ENCODE measurements at regions of chr2 and their contacts with region 1.

Region 1: DNA sequence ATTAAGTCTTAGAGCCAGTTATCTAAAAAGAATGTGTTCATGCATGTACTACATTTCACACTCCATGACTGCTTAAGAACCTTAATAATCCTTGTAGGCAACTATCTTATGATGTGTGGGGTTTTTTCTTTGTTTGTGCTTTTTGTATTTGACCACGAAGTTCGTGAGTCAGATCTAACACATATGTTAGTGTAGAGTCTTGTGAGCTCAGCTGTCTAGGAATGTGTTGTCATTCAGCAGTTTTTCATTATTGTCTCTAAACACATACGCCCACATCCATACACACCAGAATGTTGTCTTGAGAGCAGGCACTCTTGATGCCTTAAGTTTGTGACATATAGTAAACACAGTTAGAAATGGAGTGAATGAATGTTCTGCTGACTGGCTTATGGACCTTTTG is 38.4 kb downstream of the CAB39 start:
- DNase-seq: no peak
- H3K4me3 ChIP-seq: no peak overlapping the region
- H3K27ac ChIP-seq: no peak overlapping the region
- H3K4me1 ChIP-seq: peaks cover 0 to 36% (median 3%) of the 10 kb centered on the region in 4 donors
- H3K27me3 ChIP-seq: no peaks in the 10 kb centered on the region
- CTCF ChIP-seq: no peak

Region 2: GRCh38 chr2:230864598-230865306 is 113.7 kb after region 1 on chr2 and contains the start of gene ITM2C:
- intact Hi-C with region 1: no loop called
- DNase-seq: peak in 1 of 2 donors; percentile 37
- H3K4me3 ChIP-seq: peak within 1 kb of the TSS; percentile 57 to 65
- H3K27ac ChIP-seq: peak within 1 kb of the TSS; percentile 24 to 41
- H3K4me1 ChIP-seq: peaks cover 0 to 39% (median 26%) of the 10 kb centered on the region in 4 donors
- H3K27me3 ChIP-seq: peaks cover 0 to 10% of the 10 kb centered on the region in 2 donors
- CTCF ChIP-seq: no peak

Region 3: DNA sequence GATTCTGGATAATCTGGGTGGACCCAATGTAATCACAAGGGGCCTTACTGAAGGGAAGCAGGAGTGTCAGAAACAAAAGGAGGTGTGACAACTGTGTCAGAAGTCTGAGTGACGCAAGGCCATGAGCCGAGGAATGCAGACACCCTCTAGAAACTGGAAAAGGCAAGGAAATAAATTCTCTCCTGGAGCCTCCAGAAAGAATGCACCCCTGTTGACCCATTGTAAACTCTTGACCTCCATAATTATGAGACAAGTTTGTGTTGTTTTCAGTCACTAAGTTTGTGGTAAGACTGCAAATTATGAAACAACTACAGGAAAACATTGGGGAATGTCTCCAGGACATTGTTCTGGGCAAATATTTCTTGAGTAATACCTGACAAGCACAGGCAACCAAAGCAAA is 597.1 kb after region 1 on chr2:
- intact Hi-C with region 1: loop called (anchors 5 kb)
- DNase-seq: no peak
- H3K4me3 ChIP-seq: no peak overlapping the region
- H3K27ac ChIP-seq: no peak overlapping the region
- H3K4me1 ChIP-seq: no peaks in the 10 kb centered on the region
- H3K27me3 ChIP-seq: no peaks in the 10 kb centered on the region
- CTCF ChIP-seq: no peak